Heart left ventricle (tissue), 16 donors: ENCODE measurements at regions of chr20 and their contacts with region 1.

Region 1: DNA sequence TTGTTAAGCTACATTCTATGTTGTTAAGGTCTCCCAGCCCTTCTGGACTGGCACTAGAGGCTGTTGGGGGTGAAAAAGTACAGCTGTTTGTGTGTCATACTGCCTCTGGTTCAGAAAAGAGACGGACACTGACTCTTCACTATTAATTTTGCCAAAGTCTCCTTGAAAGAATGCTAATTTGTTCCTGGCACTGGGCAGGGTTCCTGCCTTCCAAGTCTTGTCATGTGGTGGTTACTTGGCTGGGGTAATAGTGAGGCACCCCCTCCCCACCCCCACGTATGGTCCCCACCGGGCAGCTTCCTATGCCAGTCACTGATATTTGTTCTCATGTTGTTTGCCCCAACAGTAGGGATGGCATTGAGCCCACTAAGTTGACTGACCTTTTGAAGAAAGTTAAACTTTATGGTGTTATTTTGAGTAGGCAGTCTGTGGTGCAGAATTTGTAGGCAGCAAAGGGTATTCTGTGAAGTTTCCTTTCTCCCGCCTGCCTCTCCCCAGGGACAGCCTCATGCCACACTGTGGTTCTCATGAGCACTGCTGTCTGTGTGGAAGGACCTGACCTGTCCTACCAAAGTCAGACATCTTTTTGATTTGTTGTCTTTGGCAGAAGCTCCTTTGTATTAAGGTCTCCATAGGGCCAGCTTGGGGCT is 8.7 kb downstream of the CDS2 start:
- DNase-seq: peak in 1 of 5 donors; percentile 16
- ATAC-seq: peak; percentile 60 to 75 (median 68)
- H3K4me3 ChIP-seq: no peak overlapping the region
- H3K27ac ChIP-seq: peak overlapping the region in 11 of 12 donors; percentile 41 to 78 (median 69)
- H3K4me1 ChIP-seq: peaks cover 0 to 82% (median 51%) of the 10 kb centered on the region in 12 donors
- H3K27me3 ChIP-seq: no peaks in the 10 kb centered on the region
- CTCF ChIP-seq: peak in 1 of 12 donors; percentile 18
- POLR2A ChIP-seq: no peak

Region 2: GRCh38 chr20:5181956-5182355 is 46.5 kb after region 1 on chr20:
- intact Hi-C with region 1: loop called in 1 of 10 experiments (anchors 5 kb)
- DNase-seq: no peak
- ATAC-seq: peak; percentile 69 to 80 (median 76)
- H3K4me3 ChIP-seq: no peak overlapping the region
- H3K27ac ChIP-seq: peak overlapping the region; percentile 33 to 84 (median 68)
- H3K4me1 ChIP-seq: peaks cover 0 to 61% (median 36%) of the 10 kb centered on the region in 12 donors
- H3K27me3 ChIP-seq: no peaks in the 10 kb centered on the region
- CTCF ChIP-seq: no peak
- POLR2A ChIP-seq: no peak

Region 3: GRCh38 chr20:5191829-5192569 is 56.5 kb after region 1 on chr20:
- intact Hi-C with region 1: loop called in 1 of 10 experiments (anchors 2 kb)
- DNase-seq: peak in 1 of 5 donors; percentile 43
- ATAC-seq: peak; percentile 57 to 74 (median 72)
- H3K4me3 ChIP-seq: no peak overlapping the region
- H3K27ac ChIP-seq: peak overlapping the region in 11 of 12 donors; percentile 45 to 72 (median 54)
- H3K4me1 ChIP-seq: peaks cover 0 to 30% (median 16%) of the 10 kb centered on the region in 12 donors
- H3K27me3 ChIP-seq: no peaks in the 10 kb centered on the region
- CTCF ChIP-seq: peak; percentile 60 to 89 (median 82)
- POLR2A ChIP-seq: no peak